ENCODE measurements at regions of chr11 and their contacts with region 1.

Region 1: GRCh38 chr11:23123753-23124152 is 263.5 kb upstream of the CCDC179 start:
- DNase-seq: no peak
- H3K4me3 ChIP-seq: no peak overlapping the region
- H3K27ac ChIP-seq: no peak overlapping the region; a peak in 1 of 4 replicates
- H3K4me1 ChIP-seq: no peaks in the 10 kb centered on the region
- H3K27me3 ChIP-seq: no peaks in the 10 kb centered on the region
- CTCF ChIP-seq: no peak
- EP300 ChIP-seq: no peak
- RAD21 ChIP-seq: no peak

Region 2: GRCh38 chr11:23112987-23113886 is 10.5 kb before region 1 on chr11:
- CTCF ChIA-PET with region 1: interaction called, 11 read pairs
- POLR2A ChIA-PET with region 1: no interaction called
- DNase-seq: peak; percentile 46
- H3K4me3 ChIP-seq: no peak overlapping the region; a peak in 1 of 4 replicates
- H3K27ac ChIP-seq: no peak overlapping the region
- H3K4me1 ChIP-seq: peaks cover 4% of the 10 kb centered on the region in 2 experiments; a peak in 2 of 4 replicates
- H3K27me3 ChIP-seq: no peaks in the 10 kb centered on the region
- CTCF ChIP-seq: peak; percentile 84
- EP300 ChIP-seq: 0 out of 4 replicates have a peak, but pooled peaks of 1 of the 2 experiments have one; percentile 14
- RAD21 ChIP-seq: peak; percentile 89